CD4-positive, alpha-beta memory T cell (primary cell): ENCODE measurements at regions of chr17 and their contacts with region 1.

Region 1: GRCh38 chr17:28763804-28764266 is 20.0 kb downstream of the TRAF4 start:
- DNase-seq: peak; percentile 71 to 82 (median 77)
- H3K4me3 ChIP-seq: no peak overlapping the region
- H3K4me3 Mint-ChIP-seq: no peak overlapping the region
- H3K27ac ChIP-seq: no peak overlapping the region
- H3K27ac Mint-ChIP-seq: peak overlapping the region in 5 of 7 donors; percentile 77 to 84 (median 82)
- H3K4me1 ChIP-seq: no peaks in the 10 kb centered on the region
- H3K4me1 Mint-ChIP-seq: peaks cover 3 to 8% (median 4%) of the 10 kb centered on the region in 4 donors
- H3K27me3 ChIP-seq: no peaks in the 10 kb centered on the region
- H3K27me3 Mint-ChIP-seq: no peaks in the 10 kb centered on the region

Region 2: DNA sequence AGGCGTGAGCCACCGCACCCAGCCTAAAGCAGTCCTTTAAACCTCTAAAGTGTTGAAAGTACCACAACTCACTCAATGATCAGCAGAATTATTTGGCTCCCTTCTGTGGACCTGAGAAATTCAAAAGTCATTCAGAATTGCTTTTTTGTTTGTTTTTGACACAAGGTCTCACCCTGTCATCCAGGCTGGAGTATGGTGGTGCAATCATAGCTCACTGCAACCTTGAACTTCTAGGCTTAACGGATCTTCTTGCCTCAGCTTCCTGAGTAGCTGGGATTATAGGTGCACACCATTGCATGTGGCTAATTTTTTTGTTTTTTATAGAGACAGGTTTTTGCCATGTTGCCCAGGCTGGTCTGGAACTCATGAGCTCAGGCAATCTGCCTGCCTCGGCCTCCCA is 24.3 kb after region 1 on chr17:
- CTCF ChIA-PET with region 1: interaction called, 10 read pairs
- POLR2A ChIA-PET with region 1: no interaction called
- intact Hi-C with region 1: no loop called
- DNase-seq: no peak
- H3K4me3 ChIP-seq: no peak overlapping the region
- H3K4me3 Mint-ChIP-seq: no peak overlapping the region
- H3K27ac ChIP-seq: no peak overlapping the region
- H3K27ac Mint-ChIP-seq: peak overlapping the region in 2 of 7 donors; percentile 17 to 57
- H3K4me1 ChIP-seq: peaks cover 3% of the 10 kb centered on the region
- H3K4me1 Mint-ChIP-seq: peaks cover 9 to 15% (median 11%) of the 10 kb centered on the region in 4 donors
- H3K27me3 ChIP-seq: no peaks in the 10 kb centered on the region
- H3K27me3 Mint-ChIP-seq: no peaks in the 10 kb centered on the region

Region 3: DNA sequence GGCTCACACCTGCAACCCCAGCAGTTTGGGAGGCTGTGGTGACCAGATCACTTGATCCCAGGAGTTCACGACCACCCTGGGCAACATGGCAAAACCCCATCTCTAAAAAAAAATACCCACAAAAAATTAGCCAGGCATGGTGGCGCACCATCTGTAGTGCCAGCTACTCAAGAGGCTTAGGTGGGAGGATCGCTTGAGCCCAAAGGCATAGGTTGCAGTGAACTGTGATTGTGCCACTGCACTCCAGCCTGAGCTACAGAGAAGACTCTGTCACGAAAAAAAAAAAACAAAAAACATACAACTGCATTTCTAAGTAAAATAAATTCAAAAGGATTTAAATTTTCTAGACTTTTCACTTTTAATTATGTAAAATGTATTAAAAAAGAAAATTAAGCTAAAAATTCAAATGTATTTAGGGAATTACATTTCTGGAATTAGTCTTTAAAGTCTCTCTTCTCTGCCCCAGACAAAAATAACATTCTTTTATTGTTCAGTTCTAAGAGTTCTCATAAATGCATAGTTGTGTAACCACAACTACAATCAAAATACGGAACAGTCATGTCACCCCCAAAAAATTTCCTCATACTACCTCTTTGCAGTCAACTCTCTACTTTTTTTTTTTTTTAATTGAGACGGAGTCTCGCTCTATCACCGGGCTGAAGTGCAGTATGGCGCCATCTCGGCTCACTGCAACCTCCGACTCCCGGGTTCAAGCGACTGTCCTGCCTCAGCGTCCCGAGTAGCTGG is 64.6 kb after region 1 on chr17:
- CTCF ChIA-PET with region 1: interaction called, 10 read pairs
- POLR2A ChIA-PET with region 1: no interaction called
- intact Hi-C with region 1: no loop called
- DNase-seq: no peak
- H3K4me3 ChIP-seq: no peak overlapping the region
- H3K4me3 Mint-ChIP-seq: no peak overlapping the region
- H3K27ac ChIP-seq: no peak overlapping the region
- H3K27ac Mint-ChIP-seq: peak overlapping the region in 1 of 7 donors; percentile 3
- H3K4me1 ChIP-seq: no peaks in the 10 kb centered on the region
- H3K4me1 Mint-ChIP-seq: peaks cover 14 to 21% (median 15%) of the 10 kb centered on the region in 4 donors
- H3K27me3 ChIP-seq: no peaks in the 10 kb centered on the region
- H3K27me3 Mint-ChIP-seq: no peaks in the 10 kb centered on the region

Region 4: DNA sequence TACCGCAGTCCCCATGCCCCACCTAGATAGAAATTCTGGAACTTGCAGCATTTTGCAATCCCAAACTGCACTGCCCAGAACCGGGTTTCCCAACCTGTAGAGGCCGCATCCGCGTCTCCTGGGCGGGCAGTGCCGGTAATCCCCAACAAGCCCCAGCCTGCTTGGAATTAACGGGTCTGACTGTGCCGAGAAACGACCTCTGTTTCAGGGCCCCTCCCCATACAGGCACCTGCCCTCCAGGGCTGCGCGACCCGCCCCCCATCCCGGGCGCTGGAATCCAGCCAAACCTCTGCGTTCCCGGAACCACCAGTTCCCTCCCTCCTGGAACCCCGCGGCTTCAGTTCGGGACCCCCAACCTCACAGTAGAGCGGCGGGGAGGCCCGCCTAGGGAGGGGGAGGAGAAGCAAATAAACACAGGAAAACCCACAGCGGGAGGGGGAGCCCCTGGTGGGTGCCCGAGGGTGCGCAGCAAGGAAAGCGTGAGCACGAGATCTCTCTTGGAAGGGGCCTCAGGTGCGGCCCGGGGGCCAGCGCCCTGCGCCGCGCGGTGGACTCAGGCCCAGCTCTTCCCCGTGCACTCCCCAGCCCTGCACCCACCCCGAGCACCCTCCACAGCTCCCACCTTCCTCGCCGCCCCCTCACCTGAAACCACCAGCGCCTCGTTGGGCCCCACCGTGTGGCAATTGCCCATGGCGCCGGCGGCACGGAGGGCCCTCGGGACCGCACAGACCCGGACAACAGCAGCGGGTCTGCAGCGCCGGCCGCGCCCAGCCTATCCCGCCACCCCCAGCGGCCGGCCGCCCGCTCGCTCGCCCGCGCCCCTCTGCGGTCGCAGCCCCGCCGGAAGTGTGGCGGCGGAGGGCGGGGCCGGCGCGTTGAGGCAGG is 133.3 kb after region 1 on chr17 and contains the start of gene FLOT2:
- CTCF ChIA-PET with region 1: interaction called, 55 read pairs
- POLR2A ChIA-PET with region 1: interaction called, 16 read pairs
- intact Hi-C with region 1: no loop called
- DNase-seq: peak; percentile 65 to 81 (median 74)
- H3K4me3 ChIP-seq: peak within 1 kb of the TSS; percentile 86 to 90
- H3K4me3 Mint-ChIP-seq: peak within 1 kb of the TSS; percentile 91 to 98 (median 96)
- H3K27ac ChIP-seq: peak within 1 kb of the TSS; percentile 88
- H3K27ac Mint-ChIP-seq: peak within 1 kb of the TSS; percentile 95 to 100 (median 96)
- H3K4me1 ChIP-seq: peaks cover 73% of the 10 kb centered on the region
- H3K4me1 Mint-ChIP-seq: peaks cover 47 to 83% (median 65%) of the 10 kb centered on the region in 4 donors
- H3K27me3 ChIP-seq: no peaks in the 10 kb centered on the region
- H3K27me3 Mint-ChIP-seq: no peaks in the 10 kb centered on the region
- total RNA-seq, gene FLOT2: 216 to 224 TPM

Region 5: DNA sequence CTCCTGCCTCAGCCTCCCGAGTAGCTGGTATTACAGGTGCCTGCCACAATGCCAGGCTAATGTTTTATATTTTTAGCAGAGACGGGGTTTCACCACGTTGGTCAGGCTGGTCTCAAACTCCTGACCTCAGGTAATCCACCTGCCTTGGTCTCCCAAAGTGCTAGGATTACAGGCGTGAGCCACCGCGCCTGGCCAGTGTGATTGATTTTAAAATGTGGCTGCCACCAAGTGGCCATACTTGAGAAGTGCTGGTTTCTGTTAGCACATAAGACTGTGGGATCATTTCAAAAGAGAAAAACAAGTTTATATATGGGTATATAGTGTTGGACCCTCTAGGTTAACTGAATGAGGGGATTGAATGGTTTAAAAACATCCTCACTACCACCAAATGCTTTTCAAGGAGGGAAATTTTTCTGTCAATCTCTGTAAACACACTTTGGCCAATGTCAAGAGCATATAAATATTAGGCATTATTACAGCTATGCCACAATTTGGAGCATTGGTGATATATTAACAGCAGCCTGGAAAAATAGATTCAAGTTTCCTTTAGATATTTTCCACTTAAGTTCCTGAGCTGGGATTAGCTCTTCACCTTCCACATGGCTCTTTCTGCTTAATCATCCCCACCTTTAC is 152.6 kb after region 1 on chr17:
- CTCF ChIA-PET with region 1: interaction called, 78 read pairs
- POLR2A ChIA-PET with region 1: interaction called, 6 read pairs
- intact Hi-C with region 1: loop called (anchors 1 kb)
- DNase-seq: peak; percentile 40 to 59 (median 45)
- H3K4me3 ChIP-seq: no peak overlapping the region
- H3K4me3 Mint-ChIP-seq: no peak overlapping the region
- H3K27ac ChIP-seq: no peak overlapping the region
- H3K27ac Mint-ChIP-seq: peak overlapping the region in 6 of 7 donors; percentile 70 to 91 (median 82)
- H3K4me1 ChIP-seq: no peaks in the 10 kb centered on the region
- H3K4me1 Mint-ChIP-seq: peaks cover 0 to 6% (median 4%) of the 10 kb centered on the region in 4 donors
- H3K27me3 ChIP-seq: no peaks in the 10 kb centered on the region
- H3K27me3 Mint-ChIP-seq: no peaks in the 10 kb centered on the region

Region 6: GRCh38 chr17:28973425-28973824 is 209.6 kb after region 1 on chr17:
- CTCF ChIA-PET with region 1: no interaction called
- POLR2A ChIA-PET with region 1: no interaction called
- intact Hi-C with region 1: no loop called
- DNase-seq: no peak
- H3K4me3 ChIP-seq: no peak overlapping the region
- H3K4me3 Mint-ChIP-seq: no peak overlapping the region
- H3K27ac ChIP-seq: no peak overlapping the region
- H3K27ac Mint-ChIP-seq: peak overlapping the region in 1 of 7 donors; percentile 22
- H3K4me1 ChIP-seq: no peaks in the 10 kb centered on the region
- H3K4me1 Mint-ChIP-seq: peaks cover 0 to 1% (median 0%) of the 10 kb centered on the region in 4 donors
- H3K27me3 ChIP-seq: no peaks in the 10 kb centered on the region
- H3K27me3 Mint-ChIP-seq: peaks cover 0 to 6% of the 10 kb centered on the region in 2 donors

Region 7: GRCh38 chr17:29116804-29117772 is 353.3 kb after region 1 on chr17:
- CTCF ChIA-PET with region 1: interaction called, 21 read pairs
- POLR2A ChIA-PET with region 1: no interaction called
- intact Hi-C with region 1: no loop called
- DNase-seq: peak; percentile 66 to 73 (median 71)
- H3K4me3 ChIP-seq: no peak overlapping the region
- H3K4me3 Mint-ChIP-seq: peak overlapping the region in 1 of 8 donors; percentile 15
- H3K27ac ChIP-seq: no peak overlapping the region
- H3K27ac Mint-ChIP-seq: peak overlapping the region in 4 of 7 donors; percentile 43 to 75 (median 60)
- H3K4me1 ChIP-seq: peaks cover 4% of the 10 kb centered on the region
- H3K4me1 Mint-ChIP-seq: peaks cover 4 to 9% (median 8%) of the 10 kb centered on the region in 4 donors
- H3K27me3 ChIP-seq: no peaks in the 10 kb centered on the region
- H3K27me3 Mint-ChIP-seq: no peaks in the 10 kb centered on the region